Panc1 (cell line): ENCODE measurements at regions of chr9 and their contacts with region 1.

Region 1: GRCh38 chr9:127586537-127586936 is 25.5 kb upstream of the STXBP1 start:
- DNase-seq: no peak
- ATAC-seq: peak; percentile 91
- H3K4me3 ChIP-seq: no peak overlapping the region
- H3K27ac ChIP-seq: no peak overlapping the region
- H3K4me1 ChIP-seq: peaks cover 5% of the 10 kb centered on the region; the same call in 1 of the 2 replicates
- H3K27me3 ChIP-seq: no peaks in the 10 kb centered on the region
- CTCF ChIP-seq: peak; percentile 86

Region 2: GRCh38 chr9:127503947-127504782 is 82.4 kb before region 1 on chr9:
- CTCF ChIA-PET with region 1: interaction called, 5 read pairs
- POLR2A ChIA-PET with region 1: no interaction called
- in situ Hi-C with region 1: no loop called
- intact Hi-C with region 1: loop called (anchors 5 kb)
- DNase-seq: no peak
- ATAC-seq: peak; percentile 85
- H3K4me3 ChIP-seq: no peak overlapping the region
- H3K27ac ChIP-seq: peak overlapping the region; percentile 48; the same call in 1 of the 2 replicates
- H3K4me1 ChIP-seq: peaks cover 9% of the 10 kb centered on the region; the same call in 1 of the 2 replicates
- H3K27me3 ChIP-seq: no peaks in the 10 kb centered on the region
- CTCF ChIP-seq: peak; percentile 90

Region 3: GRCh38 chr9:127519301-127520166 is 67.0 kb before region 1 on chr9:
- CTCF ChIA-PET with region 1: interaction called, 15 read pairs
- POLR2A ChIA-PET with region 1: no interaction called
- in situ Hi-C with region 1: no loop called
- intact Hi-C with region 1: no loop called
- DNase-seq: no peak
- ATAC-seq: peak; percentile 79
- H3K4me3 ChIP-seq: no peak overlapping the region
- H3K27ac ChIP-seq: peak overlapping the region; percentile 87
- H3K4me1 ChIP-seq: peaks cover 35% of the 10 kb centered on the region
- H3K27me3 ChIP-seq: no peaks in the 10 kb centered on the region
- CTCF ChIP-seq: no peak

Region 4: DNA sequence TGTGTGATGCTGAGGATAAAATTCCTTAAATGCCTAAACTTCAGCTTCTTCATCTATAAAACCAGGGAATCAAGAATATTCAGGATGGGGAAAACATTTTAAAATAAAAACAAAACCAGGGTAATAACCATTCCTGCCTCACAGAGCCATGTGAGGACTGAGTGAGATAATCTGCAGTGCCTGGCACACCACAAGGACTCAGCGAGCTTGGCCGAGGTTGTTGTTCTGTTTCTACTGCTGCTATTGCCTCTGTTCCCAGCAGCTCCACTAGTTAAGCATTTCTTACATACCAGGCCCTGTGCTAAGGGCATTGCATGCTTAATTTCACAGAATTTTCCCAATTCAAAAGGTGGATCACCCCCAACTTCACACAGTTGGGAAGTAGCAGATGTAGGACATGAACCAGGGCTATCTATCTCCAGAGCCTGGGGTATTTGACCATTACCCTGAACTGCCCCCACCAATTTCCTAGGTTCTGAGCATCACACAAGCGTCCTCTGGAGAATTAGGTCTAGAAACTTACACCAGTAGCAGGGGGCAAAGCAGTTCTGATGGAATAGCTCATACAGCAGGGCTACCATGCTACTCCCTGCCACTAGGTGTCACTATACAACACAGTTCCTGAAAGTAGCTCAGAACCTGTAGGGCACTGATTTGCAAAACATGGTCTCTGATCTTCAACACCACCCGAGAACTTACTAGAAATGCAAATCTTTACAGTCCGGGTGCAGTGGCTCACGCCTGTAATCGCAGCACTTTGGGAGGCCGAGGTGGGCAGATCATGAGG is 60.9 kb before region 1 on chr9:
- CTCF ChIA-PET with region 1: interaction called, 11 read pairs
- POLR2A ChIA-PET with region 1: interaction called, 4 read pairs
- in situ Hi-C with region 1: no loop called
- intact Hi-C with region 1: no loop called
- DNase-seq: no peak
- ATAC-seq: no peak
- H3K4me3 ChIP-seq: no peak overlapping the region
- H3K27ac ChIP-seq: peak overlapping the region; percentile 64
- H3K4me1 ChIP-seq: peaks cover 38% of the 10 kb centered on the region
- H3K27me3 ChIP-seq: no peaks in the 10 kb centered on the region
- CTCF ChIP-seq: no peak; the same call in 1 of the 2 replicates

Region 5: GRCh38 chr9:127734747-127735529 is 148.4 kb after region 1 on chr9 and contains the start of gene TOR2A:
- CTCF ChIA-PET with region 1: interaction called, 4 read pairs
- POLR2A ChIA-PET with region 1: no interaction called
- in situ Hi-C with region 1: no loop called
- intact Hi-C with region 1: loop called (anchors 10 kb)
- DNase-seq: peak; percentile 70
- ATAC-seq: peak; percentile 98
- H3K4me3 ChIP-seq: peak within 1 kb of the TSS; percentile 63 to 65
- H3K27ac ChIP-seq: peak within 1 kb of the TSS; percentile 44
- H3K4me1 ChIP-seq: no peaks in the 10 kb centered on the region
- H3K27me3 ChIP-seq: no peaks in the 10 kb centered on the region
- CTCF ChIP-seq: peak; percentile 81
- total RNA-seq, gene TOR2A: 8.2 TPM